HEK293 (cell line): ENCODE measurements at regions of chr1 and their contacts with region 1.

Region 1: DNA sequence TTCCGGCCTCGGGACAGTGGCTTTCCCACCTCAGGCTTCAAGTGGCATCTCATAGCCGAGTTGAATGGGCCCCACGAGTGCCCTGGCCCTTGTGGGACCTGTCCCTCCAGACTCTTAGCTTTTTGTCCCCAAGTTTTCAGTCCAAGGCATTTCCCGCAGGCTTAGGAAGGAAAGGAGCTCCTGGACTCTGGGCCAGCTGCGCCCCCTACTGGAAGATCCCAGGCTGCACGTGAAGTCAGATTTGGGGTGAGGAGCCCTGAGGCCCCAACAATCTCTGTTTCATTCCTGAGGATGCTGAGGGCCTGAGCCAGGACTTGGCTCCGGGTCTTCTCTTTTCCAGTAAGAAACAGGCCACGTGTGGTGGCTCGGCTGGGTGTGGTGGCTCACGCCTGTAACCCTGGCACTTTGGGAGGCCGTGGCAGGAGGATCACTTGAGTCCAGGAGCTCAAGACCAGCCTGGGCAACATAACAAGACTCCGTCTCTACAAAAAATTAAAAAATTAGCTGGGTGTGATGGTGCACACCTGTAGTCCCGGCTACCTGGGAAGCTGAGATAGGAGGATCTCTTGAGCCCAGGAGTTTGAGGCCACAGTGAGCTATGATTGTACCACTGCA is 67.4 kb downstream of the ARHGEF10L start:
- H3K4me3 ChIP-seq: no peak overlapping the region
- H3K27ac ChIP-seq: no peak overlapping the region
- H3K4me1 ChIP-seq: no peaks in the 10 kb centered on the region
- CTCF ChIP-seq: peak; percentile 65

Region 2: DNA sequence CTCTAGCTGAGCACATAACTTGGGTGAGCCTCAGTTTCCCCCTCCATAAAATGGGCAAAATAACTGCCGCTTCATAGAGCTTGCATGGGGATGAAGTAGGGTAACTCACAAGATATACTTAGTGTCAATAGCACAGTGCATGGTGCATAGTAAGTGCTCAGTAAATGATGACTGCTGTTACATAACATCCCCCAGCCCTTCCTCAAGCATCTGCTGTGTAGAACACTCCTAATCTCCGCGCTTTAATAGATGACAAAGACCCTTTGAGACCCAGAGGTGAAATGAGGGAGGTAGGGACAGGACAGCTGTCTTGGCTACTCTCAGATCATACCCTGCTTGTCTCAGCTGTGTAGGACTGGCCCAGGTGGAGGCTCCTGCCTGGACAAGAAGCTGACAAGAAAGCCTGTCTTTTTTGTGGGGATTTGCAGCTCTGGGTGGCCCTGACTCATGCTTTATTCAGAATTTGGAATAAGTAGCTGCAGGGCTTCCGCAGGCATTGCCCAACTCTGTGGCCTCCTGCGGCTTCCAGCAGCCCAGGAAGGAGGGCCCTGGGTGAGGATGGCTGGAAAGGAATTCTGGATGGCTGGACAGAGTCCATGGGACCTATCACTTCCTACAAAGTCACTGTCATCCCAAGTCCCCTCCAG is 319.7 kb before region 1 on chr1:
- CTCF ChIA-PET with region 1: no interaction called
- POLR2A ChIA-PET with region 1: no interaction called
- H3K4me3 ChIP-seq: no peak overlapping the region
- H3K27ac ChIP-seq: no peak overlapping the region
- H3K4me1 ChIP-seq: peaks cover 3% of the 10 kb centered on the region; the same call in 1 of the 2 replicates
- CTCF ChIP-seq: no peak

Region 3: DNA sequence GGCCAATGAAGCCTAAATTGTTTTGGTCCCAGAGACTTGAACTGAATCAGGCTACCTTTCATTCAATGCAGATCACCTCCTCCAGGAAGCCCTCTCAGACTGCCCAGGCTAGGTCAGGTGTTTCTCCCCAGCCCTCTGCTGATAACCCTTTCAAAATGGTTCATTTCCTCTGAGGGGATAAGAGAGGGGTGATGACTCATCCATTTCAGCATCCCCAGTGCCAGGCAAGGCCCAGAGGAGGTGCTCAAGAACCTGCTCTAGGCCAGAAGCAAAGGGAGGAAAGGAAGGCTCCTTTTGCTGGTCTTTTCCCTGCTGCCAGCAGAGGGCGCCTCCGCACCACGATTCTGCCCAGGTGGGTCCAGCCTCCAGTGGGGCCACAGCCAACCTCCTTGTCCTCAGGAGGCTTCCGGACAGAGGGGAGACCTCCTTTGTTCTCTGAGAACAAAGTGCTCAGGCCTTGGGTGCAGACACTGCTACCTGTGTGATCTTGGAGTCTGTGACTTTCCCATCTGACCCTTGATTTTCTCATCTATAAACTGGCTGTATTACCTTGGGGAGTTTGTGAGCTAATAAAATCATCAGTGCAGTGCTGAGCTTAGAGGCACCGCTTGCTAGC is 112.7 kb before region 1 on chr1:
- CTCF ChIA-PET with region 1: interaction called, 48 read pairs
- POLR2A ChIA-PET with region 1: no interaction called
- H3K4me3 ChIP-seq: no peak overlapping the region
- H3K27ac ChIP-seq: no peak overlapping the region
- H3K4me1 ChIP-seq: no peaks in the 10 kb centered on the region
- CTCF ChIP-seq: peak; percentile 84

Region 4: DNA sequence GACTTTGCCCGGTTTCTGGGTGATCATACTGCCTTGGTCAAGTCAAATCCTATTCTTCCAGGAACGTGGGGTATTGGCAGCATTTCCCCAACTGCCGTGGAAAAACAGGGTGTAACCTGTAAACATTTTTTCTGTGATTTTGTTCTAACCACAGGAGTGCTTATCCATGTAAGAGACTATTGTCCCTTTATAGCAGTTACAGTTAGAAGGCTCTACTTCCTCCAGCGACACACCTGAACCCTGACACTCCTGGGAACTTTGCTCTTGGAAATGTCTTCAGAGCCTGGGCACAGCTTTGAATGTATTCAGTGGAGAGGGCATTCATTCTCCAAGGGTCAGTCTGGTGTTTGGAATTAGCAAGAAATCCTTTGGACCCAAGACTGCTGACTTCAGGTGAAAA is 93.8 kb before region 1 on chr1:
- CTCF ChIA-PET with region 1: interaction called, 250 read pairs
- POLR2A ChIA-PET with region 1: no interaction called
- H3K4me3 ChIP-seq: no peak overlapping the region
- H3K27ac ChIP-seq: no peak overlapping the region
- H3K4me1 ChIP-seq: no peaks in the 10 kb centered on the region
- CTCF ChIP-seq: no peak

Region 5: GRCh38 chr1:17569200-17570161 is 37.5 kb before region 1 on chr1:
- CTCF ChIA-PET with region 1: interaction called, 48 read pairs
- POLR2A ChIA-PET with region 1: no interaction called
- H3K4me3 ChIP-seq: no peak overlapping the region
- H3K27ac ChIP-seq: no peak overlapping the region
- H3K4me1 ChIP-seq: no peaks in the 10 kb centered on the region; the same call in 1 of the 2 replicates
- CTCF ChIP-seq: no peak

Region 6: DNA sequence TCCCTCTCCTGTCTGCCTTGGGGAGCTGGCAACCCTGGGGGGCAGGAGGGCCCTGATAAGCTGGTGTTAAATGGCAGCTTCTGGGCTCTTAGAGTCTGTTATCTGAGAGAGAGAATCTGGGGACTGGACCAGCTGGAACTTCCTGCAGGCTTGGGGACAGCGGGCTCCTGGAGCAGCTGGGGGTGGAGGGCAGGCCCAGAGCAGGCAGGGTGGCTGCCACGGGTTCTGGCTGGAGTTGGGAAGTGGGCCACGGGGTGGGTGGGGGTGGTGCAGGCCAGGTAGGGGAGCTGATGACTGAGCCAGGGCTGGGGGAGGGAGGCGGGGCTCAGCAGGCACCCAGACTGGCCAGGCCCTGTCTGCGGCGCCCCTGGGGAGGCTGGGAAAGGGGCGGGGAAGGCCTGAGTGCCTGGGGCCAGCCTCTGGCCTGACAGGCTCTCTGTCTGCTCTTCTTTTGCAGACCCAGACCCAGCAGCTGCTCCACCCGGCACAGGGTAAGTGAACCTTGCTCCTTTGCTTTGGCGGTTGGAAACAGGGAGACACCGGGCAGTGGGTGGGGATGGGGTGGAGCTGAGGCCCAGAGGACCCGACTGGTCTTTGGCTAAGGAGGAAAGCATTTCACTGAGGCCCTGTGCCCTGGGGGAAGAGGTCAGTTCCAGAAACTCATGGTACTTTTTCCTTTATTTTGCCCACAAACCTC is 18.8 kb before region 1 on chr1:
- CTCF ChIA-PET with region 1: interaction called, 10 read pairs
- POLR2A ChIA-PET with region 1: no interaction called
- H3K4me3 ChIP-seq: no peak overlapping the region
- H3K27ac ChIP-seq: peak overlapping the region; percentile 41; the same call in 1 of the 2 replicates
- H3K4me1 ChIP-seq: peaks cover 4% of the 10 kb centered on the region
- CTCF ChIP-seq: no peak